RWPE1 (cell line): ENCODE measurements at regions of chr9 and their contacts with region 1.

Region 1: DNA sequence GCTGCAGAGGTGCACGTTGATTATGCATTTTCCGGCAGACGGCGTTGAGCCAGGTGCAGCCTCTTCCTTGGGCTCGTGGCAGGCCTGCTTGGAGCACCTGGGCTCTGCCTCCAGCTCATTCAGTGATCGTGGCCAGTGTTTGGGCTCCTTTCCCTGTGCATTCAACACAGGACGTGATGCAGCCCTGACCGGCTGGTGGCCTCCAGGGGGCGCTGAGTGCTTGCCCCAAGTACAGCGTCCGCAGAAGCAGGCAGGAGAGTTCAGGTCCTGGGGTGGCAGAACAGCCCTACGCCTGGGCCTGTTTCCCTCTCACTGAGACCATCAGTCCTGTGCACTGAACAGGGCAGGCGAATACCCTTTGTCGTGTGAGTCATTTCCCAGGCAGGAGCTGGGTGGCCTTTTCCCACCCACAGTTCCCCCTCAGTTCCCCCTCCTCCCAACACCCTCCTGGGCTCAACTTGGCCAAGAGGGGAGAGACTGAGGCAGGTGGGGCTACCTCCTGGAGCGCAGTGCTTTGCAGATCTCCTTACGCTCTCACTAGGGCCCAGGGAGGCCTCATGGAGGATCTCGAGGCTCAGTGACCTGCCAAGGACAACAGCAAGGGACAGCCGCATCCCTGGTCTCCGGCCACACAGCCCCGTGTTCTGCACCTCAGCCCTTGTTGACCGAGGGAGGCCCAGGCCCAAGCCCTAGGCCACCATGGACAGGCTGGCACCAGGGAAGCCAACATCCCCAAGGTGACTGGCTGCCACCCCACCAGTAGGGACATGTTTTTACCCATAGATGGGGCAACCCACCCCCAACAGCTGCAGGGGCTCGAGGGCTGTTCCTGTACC is 52.9 kb downstream of the LRSAM1 start:
- DNase-seq: peak; percentile 67
- H3K27ac ChIP-seq: peak overlapping the region; percentile 93
- CTCF ChIP-seq: peak; percentile 97

Region 2: GRCh38 chr9:127360829-127361228 is 143.3 kb before region 1 on chr9:
- CTCF ChIA-PET with region 1: no interaction called
- POLR2A ChIA-PET with region 1: no interaction called
- DNase-seq: peak; percentile 76
- H3K27ac ChIP-seq: peak overlapping the region; percentile 84
- CTCF ChIP-seq: no peak; the same call in 1 of the 2 replicates

Region 3: GRCh38 chr9:127537792-127538191 is 33.6 kb after region 1 on chr9:
- CTCF ChIA-PET with region 1: interaction called, 16 read pairs
- POLR2A ChIA-PET with region 1: no interaction called
- DNase-seq: peak; percentile 87
- H3K27ac ChIP-seq: peak overlapping the region; percentile 99
- CTCF ChIP-seq: no peak; the same call in 1 of the 2 replicates

Region 4: GRCh38 chr9:127586537-127586936 is 82.4 kb after region 1 on chr9:
- CTCF ChIA-PET with region 1: interaction called, 44 read pairs
- POLR2A ChIA-PET with region 1: no interaction called
- DNase-seq: peak; percentile 90
- H3K27ac ChIP-seq: peak overlapping the region; percentile 93
- CTCF ChIP-seq: peak; percentile 99

Region 5: GRCh38 chr9:127731938-127732337 is 227.8 kb after region 1 on chr9:
- CTCF ChIA-PET with region 1: no interaction called
- POLR2A ChIA-PET with region 1: no interaction called
- DNase-seq: no peak
- H3K27ac ChIP-seq: peak overlapping the region; percentile 89
- CTCF ChIP-seq: no peak